Activated T-helper 1 cell treated with anti-CD3 and anti-CD28 coated beads, Interleukin-12 subunit alpha, Interleukin-12 subunit beta, Interleukin-2, Interleukin-4 antibody, amounts not matched to agents 30 ng/mL and 10 ng/mL and 1 ng/mL, durations not matched to agents 14 hours and 24 hours and 36 hours (primary cell): ENCODE measurements at regions of chr3 and their contacts with region 1.

Region 1: GRCh38 chr3:56251343-56251945 is 216.8 kb downstream of the ERC2 start:
- DNase-seq: no peak
- H3K4me3 Mint-ChIP-seq: no peak overlapping the region
- H3K27ac Mint-ChIP-seq: no peak overlapping the region
- H3K4me1 Mint-ChIP-seq: no peaks in the 10 kb centered on the region
- H3K27me3 Mint-ChIP-seq: peaks cover 4% of the 10 kb centered on the region

Region 2: DNA sequence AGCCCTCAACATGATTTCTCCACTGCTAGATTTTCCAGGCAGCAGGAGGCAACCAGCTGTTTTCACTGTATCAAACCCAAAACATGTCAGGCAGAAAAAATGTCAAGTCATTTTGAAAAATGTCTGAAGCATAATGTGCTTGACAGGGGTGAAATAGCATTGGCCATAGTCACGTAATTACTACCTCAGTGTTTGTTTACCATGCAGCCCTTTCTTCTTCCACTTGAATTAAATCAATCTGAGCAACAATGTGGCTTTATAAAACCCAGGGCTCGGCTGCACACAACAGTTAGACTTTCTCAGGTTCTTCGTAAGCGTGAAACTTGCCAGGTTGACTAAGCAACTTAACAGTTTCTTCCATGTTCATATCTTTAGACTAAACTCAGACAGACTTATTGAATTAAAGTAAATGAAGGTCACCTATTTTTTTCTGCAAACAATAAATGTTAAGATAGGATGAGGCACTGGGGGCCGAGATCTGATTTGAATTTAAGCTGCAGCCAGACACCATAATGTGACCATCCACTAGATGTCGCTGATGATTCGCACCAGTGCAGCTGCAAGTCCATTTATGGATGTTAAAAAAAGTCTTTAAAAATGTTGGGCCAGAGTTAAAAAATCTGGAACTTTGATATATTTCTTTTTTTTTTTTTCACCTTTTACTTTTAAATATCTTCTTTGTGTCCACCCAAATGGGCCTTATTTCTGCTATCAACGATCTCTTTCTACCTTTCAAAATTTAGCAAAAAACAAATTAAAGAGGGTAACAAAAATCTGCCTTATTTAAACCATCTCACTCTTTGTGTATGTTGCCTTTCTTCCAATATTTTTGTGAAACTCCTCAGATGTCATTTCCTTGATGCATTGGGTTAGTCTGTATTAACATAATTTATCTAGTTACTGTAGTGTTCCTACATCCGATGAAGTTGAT is 1823.2 kb before region 1 on chr3:
- intact Hi-C with region 1: loop called (anchors 5 kb)
- DNase-seq: peak; percentile 4
- H3K4me3 Mint-ChIP-seq: no peak overlapping the region
- H3K27ac Mint-ChIP-seq: no peak overlapping the region
- H3K4me1 Mint-ChIP-seq: no peaks in the 10 kb centered on the region
- H3K27me3 Mint-ChIP-seq: no peaks in the 10 kb centered on the region

Region 3: GRCh38 chr3:54830658-54831057 is 1420.8 kb before region 1 on chr3:
- intact Hi-C with region 1: loop called (anchors 5 kb)
- DNase-seq: no peak
- H3K4me3 Mint-ChIP-seq: no peak overlapping the region
- H3K27ac Mint-ChIP-seq: no peak overlapping the region
- H3K4me1 Mint-ChIP-seq: no peaks in the 10 kb centered on the region
- H3K27me3 Mint-ChIP-seq: no peaks in the 10 kb centered on the region

Region 4: DNA sequence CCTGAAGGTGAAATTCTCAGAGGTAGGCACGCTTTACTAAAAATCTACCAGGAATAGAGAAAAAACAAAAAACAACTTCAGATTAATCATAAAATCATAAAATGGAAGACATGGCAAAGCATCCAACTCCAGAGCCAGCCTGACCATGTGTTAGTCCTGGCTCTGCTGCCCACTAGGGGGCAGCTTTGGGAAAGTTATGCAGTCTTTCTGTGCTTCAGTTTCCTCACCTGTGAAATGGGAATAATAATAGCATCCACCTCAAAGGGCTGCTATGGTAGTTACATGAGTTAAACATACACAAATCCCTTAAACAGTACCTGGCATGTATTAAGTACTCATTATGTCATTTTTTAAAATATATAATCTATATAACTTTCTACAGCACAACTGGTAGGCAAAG is 816.7 kb before region 1 on chr3:
- intact Hi-C with region 1: loop called (anchors 1 kb)
- DNase-seq: no peak
- H3K4me3 Mint-ChIP-seq: no peak overlapping the region
- H3K27ac Mint-ChIP-seq: no peak overlapping the region
- H3K4me1 Mint-ChIP-seq: no peaks in the 10 kb centered on the region
- H3K27me3 Mint-ChIP-seq: no peaks in the 10 kb centered on the region

Region 5: DNA sequence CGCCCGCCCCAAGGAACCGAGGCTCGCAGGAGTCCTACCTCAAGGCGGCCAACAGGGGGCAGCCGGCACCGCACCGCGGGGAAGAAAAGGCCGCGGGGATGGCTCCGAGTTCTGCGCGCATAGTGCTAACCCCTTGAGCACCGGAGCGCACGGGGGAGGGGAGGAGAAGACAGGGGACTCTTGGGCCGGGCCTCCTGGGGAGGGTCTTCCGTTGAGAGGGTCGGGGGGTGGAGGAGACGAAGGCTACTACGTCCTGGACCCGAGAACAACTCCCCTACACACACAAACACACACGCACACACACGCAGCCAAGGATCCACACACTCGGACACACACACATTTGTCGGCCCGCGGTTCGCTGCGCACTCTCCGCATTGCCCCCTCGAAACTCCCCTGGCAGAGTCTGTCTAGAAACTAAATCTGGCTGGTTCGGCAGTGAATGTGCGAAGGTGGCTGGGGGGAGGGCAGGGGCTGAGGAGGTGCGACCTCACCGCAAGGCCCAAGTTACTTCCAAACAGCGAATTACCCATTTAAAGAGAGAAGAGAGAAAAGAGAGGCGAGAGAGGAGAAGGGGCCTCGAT is 766.1 kb before region 1 on chr3:
- intact Hi-C with region 1: loop called (anchors 1 kb)
- DNase-seq: peak; percentile 12
- H3K4me3 Mint-ChIP-seq: no peak overlapping the region
- H3K27ac Mint-ChIP-seq: no peak overlapping the region
- H3K4me1 Mint-ChIP-seq: peaks cover 5% of the 10 kb centered on the region
- H3K27me3 Mint-ChIP-seq: peaks cover 80% of the 10 kb centered on the region

Region 6: DNA sequence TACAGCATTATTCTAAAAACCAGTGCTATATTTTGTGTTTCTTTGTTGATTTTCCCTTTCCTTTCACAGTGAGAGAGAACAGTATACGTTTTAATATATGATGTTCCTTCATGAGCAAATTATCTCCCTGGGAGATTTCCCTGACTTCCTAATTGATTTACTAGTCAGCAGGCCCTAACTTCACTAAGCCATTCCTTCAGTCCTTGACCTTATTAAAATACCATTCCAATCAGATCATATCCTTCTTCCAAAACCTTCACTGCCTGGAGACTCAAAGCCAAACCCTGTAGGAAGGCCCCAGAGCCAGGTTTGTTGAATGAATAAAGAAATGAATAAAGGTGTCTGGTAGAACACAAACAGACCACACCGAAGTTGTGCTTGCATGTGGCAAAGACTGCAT is 594.1 kb after region 1 on chr3:
- intact Hi-C with region 1: no loop called
- DNase-seq: no peak
- H3K4me3 Mint-ChIP-seq: no peak overlapping the region
- H3K27ac Mint-ChIP-seq: no peak overlapping the region
- H3K4me1 Mint-ChIP-seq: peaks cover 9% of the 10 kb centered on the region
- H3K27me3 Mint-ChIP-seq: no peaks in the 10 kb centered on the region